AG04450 (cell line): ENCODE measurements at regions of chr11 and their contacts with region 1.

Region 1: GRCh38 chr11:8092587-8093424 is 11.8 kb downstream of the TUB start:
- DNase-seq: no peak
- H3K4me3 ChIP-seq: no peak overlapping the region
- H3K27ac ChIP-seq: no peak overlapping the region
- H3K27me3 ChIP-seq: no peaks in the 10 kb centered on the region
- CTCF ChIP-seq: peak; percentile 84

Region 2: GRCh38 chr11:8018484-8019313 is 74.1 kb before region 1 on chr11:
- CTCF ChIA-PET with region 1: interaction called, 66 read pairs
- POLR2A ChIA-PET with region 1: no interaction called
- DNase-seq: peak; percentile 16
- H3K4me3 ChIP-seq: peak overlapping the region; percentile 70
- H3K27ac ChIP-seq: no peak overlapping the region
- H3K27me3 ChIP-seq: peaks cover 2% of the 10 kb centered on the region
- CTCF ChIP-seq: no peak

Region 3: GRCh38 chr11:8070417-8071115 is 22.2 kb before region 1 on chr11:
- CTCF ChIA-PET with region 1: interaction called, 10 read pairs
- POLR2A ChIA-PET with region 1: no interaction called
- DNase-seq: no peak
- H3K4me3 ChIP-seq: no peak overlapping the region
- H3K27ac ChIP-seq: no peak overlapping the region
- H3K27me3 ChIP-seq: peaks cover 2% of the 10 kb centered on the region
- CTCF ChIP-seq: peak; percentile 53

Region 4: DNA sequence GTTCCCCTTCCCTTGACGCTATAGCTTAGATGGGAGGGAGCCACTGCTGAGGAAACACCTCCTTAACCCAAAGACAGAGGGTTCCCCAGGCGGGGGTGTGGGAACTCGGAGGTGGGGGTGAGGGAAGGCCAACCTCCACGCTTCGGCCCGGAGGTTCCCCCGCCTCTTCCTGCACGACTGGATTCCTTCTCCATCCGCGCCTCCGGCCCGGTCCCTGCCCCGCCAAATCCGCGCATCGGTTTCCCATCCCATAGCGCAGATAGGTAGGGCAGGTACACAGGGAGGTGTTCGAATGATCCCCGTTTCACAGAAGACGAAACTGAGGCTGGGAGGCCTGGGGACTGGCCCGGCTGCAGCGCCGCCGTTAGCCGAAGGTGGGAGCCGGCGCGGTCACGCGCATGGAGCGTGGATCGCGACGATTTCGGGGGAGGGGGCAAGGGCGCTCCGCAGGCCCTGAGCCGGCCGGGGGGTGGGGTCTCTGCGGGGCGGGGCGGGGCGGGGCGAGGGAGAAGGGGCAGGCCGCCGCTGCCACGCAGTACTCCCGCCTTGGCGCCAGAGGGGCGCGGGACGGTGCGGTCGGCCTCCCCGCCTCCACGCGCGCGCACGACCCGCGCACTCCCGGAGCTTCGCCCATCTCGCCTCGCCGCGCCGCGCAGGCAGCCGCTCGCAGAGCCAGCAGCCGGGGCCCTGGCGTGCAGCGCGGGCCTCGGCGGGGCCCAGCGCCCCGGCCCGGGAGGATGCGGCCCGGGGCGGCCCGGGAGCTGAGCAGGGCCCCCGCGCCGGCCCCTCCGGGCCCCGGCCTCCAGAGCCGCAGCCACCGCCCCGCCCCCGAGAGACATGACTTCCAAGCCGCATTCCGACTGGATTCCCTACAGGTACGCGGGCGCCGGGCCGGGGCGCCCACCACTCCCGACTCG is 11.9 kb before region 1 on chr11 and contains the start of gene TUB:
- CTCF ChIA-PET with region 1: interaction called, 63 read pairs
- POLR2A ChIA-PET with region 1: no interaction called
- DNase-seq: no peak
- H3K4me3 ChIP-seq: peak within 1 kb of the TSS; percentile 65
- H3K27ac ChIP-seq: peak within 1 kb of the TSS; percentile 21
- H3K27me3 ChIP-seq: peaks cover 2% of the 10 kb centered on the region
- CTCF ChIP-seq: no peak
- polyA plus RNA-seq, gene TUB: 13.9 and 14.7 TPM in 2 replicates

Region 5: GRCh38 chr11:8105666-8106065 is 12.9 kb after region 1 on chr11:
- CTCF ChIA-PET with region 1: interaction called, 96 read pairs
- POLR2A ChIA-PET with region 1: no interaction called
- DNase-seq: no peak
- H3K4me3 ChIP-seq: no peak overlapping the region
- H3K27ac ChIP-seq: no peak overlapping the region
- H3K27me3 ChIP-seq: peaks cover 3% of the 10 kb centered on the region
- CTCF ChIP-seq: no peak

Region 6: GRCh38 chr11:8111636-8112035 is 18.8 kb after region 1 on chr11:
- CTCF ChIA-PET with region 1: interaction called, 96 read pairs
- POLR2A ChIA-PET with region 1: no interaction called
- DNase-seq: no peak
- H3K4me3 ChIP-seq: no peak overlapping the region
- H3K27ac ChIP-seq: no peak overlapping the region
- H3K27me3 ChIP-seq: peaks cover 7% of the 10 kb centered on the region
- CTCF ChIP-seq: no peak